CD8-positive, alpha-beta T cell (primary cell): ENCODE measurements at regions of chr16 and their contacts with region 1.

Region 1: GRCh38 chr16:760545-761343 is at the start of gene MSLN:
- DNase-seq: peak in 1 of 9 experiments; percentile 4
- ATAC-seq: no peak
- H3K4me3 ChIP-seq: no peak within 1 kb of the TSS
- H3K4me3 Mint-ChIP-seq: no peak within 1 kb of the TSS
- H3K27ac ChIP-seq: no peak within 1 kb of the TSS
- H3K27ac Mint-ChIP-seq: no peak within 1 kb of the TSS
- H3K4me1 ChIP-seq: no peaks in the 10 kb centered on the region
- H3K4me1 Mint-ChIP-seq: peaks cover 4% of the 10 kb centered on the region
- H3K27me3 ChIP-seq: no peaks in the 10 kb centered on the region
- H3K27me3 Mint-ChIP-seq: peaks cover 9% of the 10 kb centered on the region
- CTCF ChIP-seq: no peak
- total RNA-seq, gene MSLN: not detected

Region 2: DNA sequence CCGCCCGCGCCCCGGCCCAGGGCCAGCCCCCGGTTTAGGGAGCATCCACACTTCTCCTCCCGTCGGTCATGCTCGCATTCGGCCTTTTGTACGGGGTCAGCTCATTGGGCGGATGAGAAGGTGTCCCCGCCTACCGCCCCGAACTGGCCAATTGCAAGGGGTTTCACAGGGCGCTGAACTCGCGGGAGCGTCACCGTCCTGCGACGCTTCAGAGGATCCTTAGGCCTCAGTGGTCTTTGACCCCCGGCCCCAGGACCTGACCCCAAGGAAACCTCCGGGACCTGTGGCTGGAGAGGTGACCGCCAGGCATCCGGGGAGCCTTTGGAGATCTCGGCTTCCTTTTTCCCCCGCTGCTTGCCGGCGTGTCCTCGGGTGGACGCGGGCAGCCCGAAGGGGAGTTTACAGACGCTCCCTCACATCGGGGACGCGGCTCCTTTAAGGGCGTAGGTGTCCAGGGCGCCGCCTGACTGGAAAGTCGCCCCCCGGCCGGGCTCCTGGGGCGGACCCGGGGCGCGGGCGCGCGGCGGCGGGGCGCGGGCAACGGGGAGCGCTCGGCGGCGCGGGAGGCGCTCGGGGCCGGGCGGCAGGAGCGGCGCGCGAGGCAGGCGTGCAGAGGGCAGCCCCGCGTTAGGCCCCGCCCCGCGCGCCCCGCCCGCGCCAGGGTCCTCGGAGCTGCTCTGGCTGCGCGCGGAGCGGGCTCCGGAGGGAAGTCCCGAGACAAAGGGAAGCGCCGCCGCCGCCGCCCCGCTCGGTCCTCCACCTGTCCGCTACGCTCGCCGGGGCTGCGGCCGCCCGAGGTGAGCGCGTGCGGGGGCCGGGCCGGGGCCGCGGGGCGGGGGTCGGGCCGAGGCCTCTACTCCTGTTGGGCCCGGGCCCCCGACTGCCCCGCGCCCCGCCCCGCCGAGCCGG is 548.5 kb after region 1 on chr16 and contains the start of gene UBE2I:
- CTCF ChIA-PET with region 1: no interaction called
- POLR2A ChIA-PET with region 1: no interaction called
- intact Hi-C with region 1: no loop called
- DNase-seq: peak; percentile 96 to 99 (median 98)
- ATAC-seq: peak; percentile 73
- H3K4me3 ChIP-seq: peak within 1 kb of the TSS; percentile 82 to 95
- H3K4me3 Mint-ChIP-seq: peak within 1 kb of the TSS; percentile 92
- H3K27ac ChIP-seq: peak within 1 kb of the TSS; percentile 100
- H3K27ac Mint-ChIP-seq: peak within 1 kb of the TSS; percentile 100
- H3K4me1 ChIP-seq: peaks cover 50% of the 10 kb centered on the region
- H3K4me1 Mint-ChIP-seq: peaks cover 41% of the 10 kb centered on the region
- H3K27me3 ChIP-seq: no peaks in the 10 kb centered on the region
- H3K27me3 Mint-ChIP-seq: no peaks in the 10 kb centered on the region
- CTCF ChIP-seq: no peak
- total RNA-seq, gene UBE2I: 285 to 294 TPM

Region 3: DNA sequence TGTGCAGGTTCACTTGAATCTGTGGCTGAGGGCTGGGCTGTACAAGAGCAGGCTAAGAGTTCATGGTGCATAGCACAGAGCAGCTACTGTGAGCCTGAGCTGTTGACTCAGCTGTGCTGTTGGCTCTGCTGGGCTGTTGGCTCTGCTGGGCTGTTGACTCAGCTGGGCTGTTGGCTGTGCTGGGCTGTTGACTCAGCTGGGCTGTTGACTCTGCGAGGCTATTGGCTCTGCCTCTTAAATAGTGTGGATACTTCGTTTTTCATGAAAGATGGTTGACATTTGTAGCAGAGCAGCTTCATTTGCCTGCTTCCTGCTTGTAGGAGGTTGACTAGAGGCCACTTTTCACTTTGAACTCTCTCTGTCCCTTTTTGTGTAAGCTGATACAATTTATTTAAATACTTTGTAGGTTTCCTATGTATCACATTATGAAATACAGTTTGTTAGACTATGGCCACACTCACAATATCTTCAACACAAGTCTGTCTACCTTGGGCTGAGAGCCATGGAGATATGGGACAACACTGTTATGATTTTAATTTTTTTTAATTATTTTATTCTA is 1628.2 kb after region 1 on chr16:
- CTCF ChIA-PET with region 1: no interaction called
- POLR2A ChIA-PET with region 1: no interaction called
- intact Hi-C with region 1: loop called in 1 of 2 experiments (anchors 10 kb)
- DNase-seq: no peak
- ATAC-seq: no peak
- H3K4me3 ChIP-seq: no peak overlapping the region
- H3K4me3 Mint-ChIP-seq: no peak overlapping the region
- H3K27ac ChIP-seq: no peak overlapping the region
- H3K27ac Mint-ChIP-seq: no peak overlapping the region
- H3K4me1 ChIP-seq: no peaks in the 10 kb centered on the region
- H3K4me1 Mint-ChIP-seq: no peaks in the 10 kb centered on the region
- H3K27me3 ChIP-seq: no peaks in the 10 kb centered on the region
- H3K27me3 Mint-ChIP-seq: peaks cover 22% of the 10 kb centered on the region
- CTCF ChIP-seq: no peak